ENCODE measurements at regions of chr5 and their contacts with region 1.

Region 1: DNA sequence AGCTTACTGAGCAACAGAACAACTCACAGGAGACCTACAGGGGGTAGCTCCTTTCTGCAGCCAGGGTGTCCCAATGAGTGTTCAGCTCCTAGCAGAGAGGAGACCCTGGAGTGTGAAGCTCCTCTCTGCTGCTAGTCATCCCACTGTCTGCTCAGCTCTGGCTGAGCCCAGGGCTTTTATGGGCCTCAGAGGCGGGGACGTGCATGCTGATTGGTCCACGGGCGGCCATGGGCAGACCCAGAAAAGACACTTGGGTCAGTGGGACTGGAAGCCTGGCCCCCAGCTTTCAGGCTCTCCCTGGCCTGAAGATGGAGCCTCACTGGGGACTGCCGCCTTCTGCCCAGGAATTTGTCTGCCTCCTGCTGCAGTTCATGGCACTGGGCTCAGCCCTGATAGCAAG is 40.6 kb downstream of the TSPAN17 start:
- DNase-seq: no peak
- H3K4me3 Mint-ChIP-seq: no peak overlapping the region
- H3K27ac Mint-ChIP-seq: no peak overlapping the region
- H3K4me1 Mint-ChIP-seq: no peaks in the 10 kb centered on the region
- H3K27me3 Mint-ChIP-seq: peaks cover 37% of the 10 kb centered on the region

Region 2: DNA sequence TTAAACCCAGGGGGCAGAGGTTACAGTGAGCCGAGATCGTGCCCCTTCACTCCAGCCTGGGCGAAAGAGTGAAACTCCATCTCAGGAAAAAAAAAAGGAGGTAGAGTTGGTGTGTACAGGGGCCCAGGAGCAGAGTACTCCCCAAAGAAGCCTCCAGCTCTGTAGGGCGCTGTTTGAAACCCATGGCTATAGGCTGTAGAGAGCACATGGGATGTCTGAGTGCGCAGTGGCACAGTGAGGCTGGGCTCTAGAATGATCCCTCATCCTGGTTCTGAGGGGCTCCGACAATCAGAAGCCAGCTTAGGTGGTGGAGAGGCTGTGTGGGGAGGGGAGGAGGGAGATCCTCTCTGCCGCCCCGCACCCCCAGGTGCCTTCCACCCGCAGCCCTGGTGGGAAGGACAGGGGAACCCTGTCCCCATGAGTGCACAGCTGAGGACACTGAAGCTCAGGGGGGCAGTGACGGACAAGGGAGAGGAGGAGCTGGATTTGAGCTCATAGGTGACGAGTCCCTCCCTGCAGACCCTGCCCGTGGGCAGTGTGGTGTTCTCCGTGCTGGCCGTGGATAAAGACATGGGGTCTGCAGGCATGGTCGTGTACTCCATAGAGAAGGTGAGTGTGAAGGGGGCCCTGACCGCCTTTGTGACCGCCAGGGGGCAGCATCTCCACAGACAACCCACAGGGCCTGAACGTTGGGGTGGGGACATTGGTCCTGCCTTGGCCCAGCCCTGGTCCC is 114.2 kb before region 1 on chr5:
- CTCF ChIA-PET with region 1: no interaction called
- POLR2A ChIA-PET with region 1: no interaction called
- DNase-seq: peak; percentile 79
- H3K4me3 Mint-ChIP-seq: no peak overlapping the region
- H3K27ac Mint-ChIP-seq: no peak overlapping the region
- H3K4me1 Mint-ChIP-seq: peaks cover 6% of the 10 kb centered on the region
- H3K27me3 Mint-ChIP-seq: peaks cover 3% of the 10 kb centered on the region

Region 3: GRCh38 chr5:177195307-177195952 is 507.5 kb after region 1 on chr5:
- CTCF ChIA-PET with region 1: interaction called, 10 read pairs
- POLR2A ChIA-PET with region 1: no interaction called
- DNase-seq: no peak
- H3K4me3 Mint-ChIP-seq: no peak overlapping the region
- H3K27ac Mint-ChIP-seq: no peak overlapping the region
- H3K4me1 Mint-ChIP-seq: peaks cover 10% of the 10 kb centered on the region
- H3K27me3 Mint-ChIP-seq: no peaks in the 10 kb centered on the region

Measured in activated CD4-positive, alpha-beta T cell treated with anti-CD3 and anti-CD28 coated beads, Interleukin-2, amount 10 ng/mL, durations not matched to agents 7 days and 5 days (primary cell).